B cell (primary cell): ENCODE measurements at regions of chr11 and their contacts with region 1.

Region 1: DNA sequence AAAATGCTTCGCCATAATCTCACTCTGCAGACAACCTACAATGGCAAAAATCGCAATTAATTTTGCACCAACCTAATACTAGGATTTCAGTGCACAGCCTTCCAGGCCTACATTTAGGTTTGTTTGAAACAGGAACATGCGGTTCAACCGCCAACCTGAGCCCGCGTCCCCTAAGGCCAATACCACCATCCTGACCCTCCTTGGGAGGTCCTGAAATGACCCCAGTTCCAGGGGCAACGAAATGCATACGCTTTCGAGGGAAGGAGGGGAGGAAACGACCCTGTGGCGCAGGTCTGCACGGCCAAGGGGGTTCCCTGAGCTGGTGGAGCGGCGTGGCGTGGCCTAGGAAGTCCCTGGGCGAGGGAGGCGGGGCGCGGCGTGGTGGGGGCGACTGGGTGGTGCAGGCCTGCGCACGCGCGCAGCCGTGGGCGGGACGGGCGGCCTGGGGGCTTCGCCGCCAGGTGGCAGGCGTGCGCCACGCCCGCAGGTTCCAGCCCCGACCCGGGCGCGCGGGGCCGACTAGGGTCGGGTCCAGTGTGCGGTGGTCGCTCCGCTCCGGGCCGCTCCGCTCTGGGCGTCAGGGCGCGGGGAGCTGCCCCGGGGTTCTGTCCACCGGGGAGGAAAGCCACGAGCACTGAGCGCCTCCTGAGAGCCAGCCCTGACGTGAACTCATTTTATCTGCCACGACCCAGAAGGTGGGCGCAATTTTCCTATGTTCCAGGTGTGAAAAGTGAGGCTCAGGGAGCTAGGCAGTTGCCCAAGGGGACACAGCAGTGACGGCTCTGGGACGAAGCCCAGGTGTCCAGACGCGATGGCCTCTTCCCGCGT is 94.1 kb downstream of the SWAP70 start:
- DNase-seq: peak; percentile 96
- ATAC-seq: peak; percentile 59
- H3K4me3 ChIP-seq: peak overlapping the region; percentile 76 to 94 (median 79)
- H3K4me3 Mint-ChIP-seq: peak overlapping the region; percentile 91
- H3K27ac ChIP-seq: peak overlapping the region; percentile 88 to 89
- H3K27ac Mint-ChIP-seq: peak overlapping the region; percentile 97
- H3K4me1 ChIP-seq: peaks cover 55 to 60% of the 10 kb centered on the region in 2 donors
- H3K4me1 Mint-ChIP-seq: peaks cover 79% of the 10 kb centered on the region
- H3K27me3 ChIP-seq: no peaks in the 10 kb centered on the region
- H3K27me3 Mint-ChIP-seq: no peaks in the 10 kb centered on the region
- CTCF ChIP-seq: peak; percentile 85

Region 2: GRCh38 chr11:9314291-9315036 is 443.6 kb before region 1 on chr11 and contains the start of gene TMEM41B:
- CTCF ChIA-PET with region 1: no interaction called
- POLR2A ChIA-PET with region 1: no interaction called
- intact Hi-C with region 1: loop called (anchors 2 kb)
- DNase-seq: peak; percentile 98
- ATAC-seq: peak; percentile 97
- H3K4me3 ChIP-seq: peak within 1 kb of the TSS; percentile 81 to 94 (median 86)
- H3K4me3 Mint-ChIP-seq: peak within 1 kb of the TSS; percentile 100
- H3K27ac ChIP-seq: peak within 1 kb of the TSS; percentile 82 to 92
- H3K27ac Mint-ChIP-seq: peak within 1 kb of the TSS; percentile 99
- H3K4me1 ChIP-seq: peaks cover 14 to 17% of the 10 kb centered on the region in 2 donors
- H3K4me1 Mint-ChIP-seq: peaks cover 43% of the 10 kb centered on the region
- H3K27me3 ChIP-seq: no peaks in the 10 kb centered on the region
- H3K27me3 Mint-ChIP-seq: peaks cover 1% of the 10 kb centered on the region
- CTCF ChIP-seq: no peak
- total RNA-seq, gene TMEM41B: 38.5 and 43.9 TPM in 2 replicates

Region 3: DNA sequence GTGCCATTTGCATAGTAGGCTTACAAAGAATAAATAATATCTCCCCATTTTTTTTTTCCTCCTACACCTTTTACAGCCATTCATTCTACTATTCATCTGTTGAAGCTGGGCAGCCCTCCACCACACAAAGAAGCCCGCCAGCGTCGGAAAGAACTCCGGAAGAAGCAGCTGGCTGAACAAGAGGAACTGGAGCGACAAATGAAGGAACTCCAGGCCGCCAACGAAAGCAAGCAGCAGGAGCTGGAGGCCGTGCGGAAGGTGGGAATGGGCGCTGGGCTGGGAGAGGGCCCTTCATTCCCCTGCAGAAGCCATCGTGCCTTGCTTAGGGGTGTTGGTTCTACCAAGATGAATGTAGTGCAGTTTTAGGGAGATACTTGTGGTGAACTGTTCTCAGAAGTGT is 25.6 kb before region 1 on chr11:
- CTCF ChIA-PET with region 1: no interaction called
- POLR2A ChIA-PET with region 1: no interaction called
- intact Hi-C with region 1: no loop called
- DNase-seq: no peak
- ATAC-seq: no peak
- H3K4me3 ChIP-seq: no peak overlapping the region
- H3K4me3 Mint-ChIP-seq: no peak overlapping the region
- H3K27ac ChIP-seq: peak overlapping the region; percentile 25 to 86
- H3K27ac Mint-ChIP-seq: peak overlapping the region; percentile 88
- H3K4me1 ChIP-seq: peaks cover 74 to 75% of the 10 kb centered on the region in 2 donors
- H3K4me1 Mint-ChIP-seq: peaks cover 82% of the 10 kb centered on the region
- H3K27me3 ChIP-seq: no peaks in the 10 kb centered on the region
- H3K27me3 Mint-ChIP-seq: no peaks in the 10 kb centered on the region
- CTCF ChIP-seq: no peak

Region 4: GRCh38 chr11:9787981-9788521 is 30.0 kb after region 1 on chr11:
- CTCF ChIA-PET with region 1: no interaction called
- POLR2A ChIA-PET with region 1: no interaction called
- intact Hi-C with region 1: no loop called
- DNase-seq: no peak
- ATAC-seq: no peak
- H3K4me3 ChIP-seq: no peak overlapping the region
- H3K4me3 Mint-ChIP-seq: peak overlapping the region; percentile 16
- H3K27ac ChIP-seq: peak overlapping the region in 1 of 2 donors; percentile 1
- H3K27ac Mint-ChIP-seq: no peak overlapping the region
- H3K4me1 ChIP-seq: peaks cover 14 to 21% of the 10 kb centered on the region in 2 donors
- H3K4me1 Mint-ChIP-seq: peaks cover 20% of the 10 kb centered on the region
- H3K27me3 ChIP-seq: no peaks in the 10 kb centered on the region
- H3K27me3 Mint-ChIP-seq: no peaks in the 10 kb centered on the region
- CTCF ChIP-seq: no peak

Region 5: GRCh38 chr11:9855579-9856287 is 97.7 kb after region 1 on chr11:
- CTCF ChIA-PET with region 1: interaction called, 11 read pairs
- POLR2A ChIA-PET with region 1: interaction called, 5 read pairs
- intact Hi-C with region 1: no loop called
- DNase-seq: peak; percentile 67
- ATAC-seq: peak; percentile 86
- H3K4me3 ChIP-seq: peak overlapping the region in 1 of 5 experiments; percentile 9
- H3K4me3 Mint-ChIP-seq: no peak overlapping the region
- H3K27ac ChIP-seq: peak overlapping the region; percentile 70 to 87
- H3K27ac Mint-ChIP-seq: no peak overlapping the region
- H3K4me1 ChIP-seq: peaks cover 46 to 51% of the 10 kb centered on the region in 2 donors
- H3K4me1 Mint-ChIP-seq: peaks cover 35% of the 10 kb centered on the region
- H3K27me3 ChIP-seq: no peaks in the 10 kb centered on the region
- H3K27me3 Mint-ChIP-seq: no peaks in the 10 kb centered on the region
- CTCF ChIP-seq: no peak

Region 6: DNA sequence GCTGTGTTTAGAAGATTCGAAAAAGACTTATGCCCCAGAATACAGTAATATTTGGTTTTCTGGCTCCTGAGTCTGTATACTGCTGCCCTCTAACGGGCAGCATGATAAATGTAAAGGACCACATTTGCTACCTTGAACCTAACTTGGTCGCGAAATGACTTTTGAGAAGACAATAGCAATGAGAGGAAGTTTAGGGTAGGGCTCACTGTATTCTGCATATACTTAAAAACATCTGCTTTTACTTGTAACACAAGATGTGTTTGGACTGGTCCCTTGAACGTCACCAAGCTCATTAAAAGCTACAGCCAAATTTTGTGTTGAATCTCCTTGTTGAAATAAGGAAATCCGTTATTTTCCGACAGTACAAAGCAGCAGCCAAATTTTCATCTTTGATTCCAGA is 215.0 kb after region 1 on chr11:
- CTCF ChIA-PET with region 1: interaction called, 56 read pairs
- POLR2A ChIA-PET with region 1: no interaction called
- intact Hi-C with region 1: loop called (anchors 1 kb)
- DNase-seq: peak; percentile 70
- ATAC-seq: peak; percentile 76
- H3K4me3 ChIP-seq: no peak overlapping the region
- H3K4me3 Mint-ChIP-seq: no peak overlapping the region
- H3K27ac ChIP-seq: no peak overlapping the region
- H3K27ac Mint-ChIP-seq: no peak overlapping the region
- H3K4me1 ChIP-seq: peaks cover 0 to 3% of the 10 kb centered on the region in 2 donors
- H3K4me1 Mint-ChIP-seq: peaks cover 4% of the 10 kb centered on the region
- H3K27me3 ChIP-seq: no peaks in the 10 kb centered on the region
- H3K27me3 Mint-ChIP-seq: no peaks in the 10 kb centered on the region
- CTCF ChIP-seq: peak; percentile 88

Region 7: DNA sequence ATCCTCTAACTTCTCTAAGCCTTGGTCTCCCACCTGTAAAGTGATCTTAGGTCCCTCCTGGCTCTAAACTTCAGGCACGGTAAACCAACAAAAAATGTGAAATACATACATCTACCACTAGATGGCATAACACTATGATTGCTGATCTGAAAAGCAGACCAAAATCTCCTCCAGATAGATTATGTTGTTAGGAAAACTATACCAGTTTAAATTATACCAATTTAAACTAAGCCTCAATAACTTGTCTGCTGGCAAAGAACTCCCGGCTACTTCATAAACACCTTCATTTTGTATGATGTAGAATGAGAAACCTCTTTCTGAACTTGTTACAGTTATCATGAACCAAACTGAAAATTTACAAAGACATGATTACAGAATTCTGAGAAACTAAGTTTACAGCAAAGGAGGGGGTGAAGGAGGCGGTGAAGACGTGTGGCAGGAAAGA is 450.1 kb after region 1 on chr11:
- CTCF ChIA-PET with region 1: no interaction called
- POLR2A ChIA-PET with region 1: no interaction called
- intact Hi-C with region 1: loop called (anchors 10 kb)
- DNase-seq: peak; percentile 71
- ATAC-seq: peak; percentile 62
- H3K4me3 ChIP-seq: no peak overlapping the region
- H3K4me3 Mint-ChIP-seq: no peak overlapping the region
- H3K27ac ChIP-seq: no peak overlapping the region
- H3K27ac Mint-ChIP-seq: no peak overlapping the region
- H3K4me1 ChIP-seq: no peaks in the 10 kb centered on the region
- H3K4me1 Mint-ChIP-seq: peaks cover 5% of the 10 kb centered on the region
- H3K27me3 ChIP-seq: no peaks in the 10 kb centered on the region
- H3K27me3 Mint-ChIP-seq: no peaks in the 10 kb centered on the region
- CTCF ChIP-seq: peak; percentile 87

Region 8: DNA sequence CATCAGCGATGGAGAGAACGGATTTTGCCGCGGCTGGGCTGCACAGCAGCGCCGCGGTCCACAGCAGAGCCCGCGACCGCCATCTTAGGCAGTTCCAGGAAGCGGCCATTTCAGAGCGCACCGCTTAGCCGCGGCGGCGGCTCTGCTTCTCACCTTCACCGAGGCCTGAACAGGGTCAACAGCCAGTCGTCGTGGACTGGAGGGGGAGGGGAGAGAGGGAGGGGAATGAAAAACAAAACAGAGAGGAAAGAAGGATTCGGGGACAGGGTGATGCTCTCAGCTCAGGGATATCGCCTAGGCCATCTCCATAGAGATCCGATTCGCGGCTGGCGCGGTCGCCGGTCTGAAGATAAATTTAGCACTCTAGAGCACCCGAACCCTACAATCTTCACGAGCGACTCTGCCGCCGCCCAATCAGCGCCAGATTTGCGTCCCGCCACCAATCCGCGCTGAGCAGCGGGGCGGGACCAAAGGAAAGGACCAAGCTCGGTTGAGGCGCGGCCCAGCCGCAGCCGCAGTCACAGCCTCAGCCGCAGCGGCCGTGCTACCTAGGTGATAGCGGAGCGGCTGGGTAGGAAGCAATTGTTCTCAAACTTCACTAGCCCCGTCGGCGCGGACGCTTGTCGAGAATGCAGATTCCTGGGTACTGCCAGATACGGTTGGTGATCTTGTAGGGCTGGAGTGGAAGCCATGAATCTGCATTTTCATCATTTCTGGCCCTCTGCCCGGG is 1099.9 kb after region 1 on chr11 and contains the start of gene ZBED5:
- CTCF ChIA-PET with region 1: no interaction called
- POLR2A ChIA-PET with region 1: no interaction called
- intact Hi-C with region 1: loop called (anchors 10 kb)
- DNase-seq: peak; percentile 98
- ATAC-seq: peak; percentile 87
- H3K4me3 ChIP-seq: peak within 1 kb of the TSS; percentile 68 to 98 (median 95)
- H3K4me3 Mint-ChIP-seq: peak within 1 kb of the TSS; percentile 98
- H3K27ac ChIP-seq: peak within 1 kb of the TSS; percentile 90 to 98
- H3K27ac Mint-ChIP-seq: peak within 1 kb of the TSS; percentile 99
- H3K4me1 ChIP-seq: peaks cover 21 to 23% of the 10 kb centered on the region in 2 donors
- H3K4me1 Mint-ChIP-seq: peaks cover 40% of the 10 kb centered on the region
- H3K27me3 ChIP-seq: no peaks in the 10 kb centered on the region
- H3K27me3 Mint-ChIP-seq: no peaks in the 10 kb centered on the region
- CTCF ChIP-seq: no peak
- total RNA-seq, gene ZBED5: 168 and 178 TPM in 2 replicates